Colonic mucosa (tissue), 4 donors: ENCODE measurements at regions of chr3 and their contacts with region 1.

Region 1: DNA sequence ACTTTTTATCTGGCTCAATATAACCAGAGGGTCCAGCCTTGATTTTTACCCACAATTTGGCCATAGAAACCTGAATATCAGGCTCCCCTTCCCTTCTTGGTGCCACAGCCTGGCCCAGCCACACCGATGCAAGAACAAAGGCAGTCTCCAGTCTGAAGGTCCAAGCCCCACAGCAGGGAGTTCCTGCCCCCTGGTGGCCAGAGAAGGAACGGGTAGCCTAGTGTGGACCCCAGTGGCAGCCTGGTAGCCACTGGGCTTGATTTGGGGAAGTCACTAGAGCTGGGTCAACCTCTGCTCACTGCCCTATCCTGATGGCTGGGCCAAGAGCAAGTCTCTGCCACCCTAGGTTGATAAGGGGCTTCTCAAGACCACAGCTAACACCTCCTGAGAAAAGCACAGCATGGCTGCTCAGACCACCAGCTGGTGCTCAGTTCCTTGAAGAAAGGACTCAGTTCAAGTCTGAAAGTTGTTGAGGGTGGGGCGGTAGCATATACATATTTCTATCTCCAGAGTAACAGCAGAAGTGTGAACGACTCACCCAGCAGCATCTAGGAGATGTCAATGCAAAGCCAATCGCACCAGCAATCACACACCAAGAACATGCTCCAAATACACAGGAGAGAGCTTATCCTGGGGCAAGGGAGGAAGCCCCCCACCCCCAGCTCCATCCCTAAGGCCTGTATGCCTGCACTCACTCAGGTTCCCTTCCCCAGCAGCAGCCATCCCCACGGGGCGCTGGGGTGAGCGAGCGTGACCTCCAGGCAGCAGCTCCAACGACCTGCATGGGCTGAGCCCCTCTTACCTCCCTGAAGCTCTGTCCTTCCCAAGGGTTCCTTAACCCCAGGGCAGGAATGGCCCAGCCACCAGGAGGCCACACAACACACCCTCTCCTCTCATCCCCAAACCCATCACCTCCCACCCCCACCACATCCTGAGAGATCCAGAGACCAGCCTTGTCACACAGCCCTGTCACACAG is 7.6 kb downstream of the PFKFB4 start:
- DNase-seq: peak; percentile 89
- H3K4me3 ChIP-seq: no peak overlapping the region
- H3K27ac ChIP-seq: no peak overlapping the region
- H3K4me1 ChIP-seq: no peaks in the 10 kb centered on the region
- H3K27me3 ChIP-seq: no peaks in the 10 kb centered on the region
- CTCF ChIP-seq: peak; percentile 93

Region 2: DNA sequence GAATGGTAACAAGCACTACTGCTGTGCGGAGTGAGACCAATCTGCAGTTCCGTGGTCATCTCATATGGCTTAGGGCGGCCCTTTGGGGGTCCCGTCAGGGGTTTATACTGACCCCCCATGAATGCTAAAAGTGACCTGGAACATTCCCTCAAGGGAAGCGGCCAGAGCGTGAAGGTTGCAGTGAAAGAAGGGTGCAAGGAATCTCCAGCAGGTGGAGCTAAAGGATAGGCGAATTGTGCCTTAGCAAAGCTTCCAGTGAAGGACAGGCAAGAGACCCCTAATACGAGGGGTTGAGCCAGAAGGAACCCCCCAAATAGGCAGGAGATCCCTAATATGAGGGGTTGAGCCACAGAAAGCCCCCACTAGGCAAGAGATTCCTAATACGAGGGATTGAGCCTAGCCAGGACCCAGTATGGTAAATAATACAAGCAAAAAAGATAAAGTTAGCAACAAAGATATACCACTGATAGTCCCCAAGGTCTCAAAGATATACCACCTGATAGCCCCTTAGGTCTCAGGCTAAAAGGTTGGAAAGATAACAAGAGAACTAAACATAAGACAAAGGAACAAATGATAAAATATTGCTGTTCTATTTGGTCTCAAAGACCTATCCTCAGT is 275.3 kb before region 1 on chr3:
- intact Hi-C with region 1: loop called (anchors 10 kb)
- DNase-seq: peak; percentile 74
- H3K4me3 ChIP-seq: no peak overlapping the region
- H3K27ac ChIP-seq: no peak overlapping the region
- H3K4me1 ChIP-seq: no peaks in the 10 kb centered on the region
- H3K27me3 ChIP-seq: no peaks in the 10 kb centered on the region
- CTCF ChIP-seq: peak; percentile 69

Region 3: DNA sequence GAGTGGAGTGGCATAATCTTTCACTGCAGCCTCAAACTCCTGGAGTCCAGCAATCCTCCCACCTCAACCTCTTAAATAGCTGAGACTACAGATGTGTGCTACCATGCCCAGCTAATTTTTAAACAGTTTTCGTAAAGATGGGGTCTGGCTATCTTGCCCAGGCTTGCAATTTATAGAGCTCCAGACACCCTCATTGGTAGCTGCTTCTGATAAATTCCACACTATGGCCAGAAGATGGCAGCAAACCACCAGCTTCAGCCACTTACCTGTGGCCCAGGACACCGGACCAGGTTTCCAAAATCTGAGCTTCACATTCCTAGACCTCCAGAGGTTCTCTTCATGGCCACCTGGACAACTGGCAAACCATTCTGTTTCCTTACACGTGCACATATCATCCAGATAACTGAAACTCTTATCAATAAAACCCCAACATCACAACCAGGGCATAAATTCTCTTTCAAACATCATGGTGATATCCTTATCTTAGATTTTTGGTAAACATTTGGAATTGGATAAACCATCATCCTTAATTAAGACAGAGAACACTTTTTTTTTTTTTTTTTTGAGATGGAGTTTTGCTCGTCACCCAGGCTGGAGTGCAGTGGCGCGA is 148.1 kb before region 1 on chr3:
- intact Hi-C with region 1: loop called (anchors 5 kb)
- DNase-seq: peak; percentile 66
- H3K4me3 ChIP-seq: no peak overlapping the region
- H3K27ac ChIP-seq: no peak overlapping the region
- H3K4me1 ChIP-seq: no peaks in the 10 kb centered on the region
- H3K27me3 ChIP-seq: no peaks in the 10 kb centered on the region
- CTCF ChIP-seq: peak; percentile 81

Region 4: GRCh38 chr3:48465531-48466378 is 83.3 kb before region 1 on chr3:
- intact Hi-C with region 1: loop called (anchors 2 kb)
- DNase-seq: peak; percentile 97
- H3K4me3 ChIP-seq: peak overlapping the region; percentile 54
- H3K27ac ChIP-seq: peak overlapping the region; percentile 94
- H3K4me1 ChIP-seq: peaks cover 31% of the 10 kb centered on the region
- H3K27me3 ChIP-seq: no peaks in the 10 kb centered on the region
- CTCF ChIP-seq: peak; percentile 53